Breast epithelium (tissue), 4 donors: ENCODE measurements at regions of chr9 and their contacts with region 1.

Region 1: DNA sequence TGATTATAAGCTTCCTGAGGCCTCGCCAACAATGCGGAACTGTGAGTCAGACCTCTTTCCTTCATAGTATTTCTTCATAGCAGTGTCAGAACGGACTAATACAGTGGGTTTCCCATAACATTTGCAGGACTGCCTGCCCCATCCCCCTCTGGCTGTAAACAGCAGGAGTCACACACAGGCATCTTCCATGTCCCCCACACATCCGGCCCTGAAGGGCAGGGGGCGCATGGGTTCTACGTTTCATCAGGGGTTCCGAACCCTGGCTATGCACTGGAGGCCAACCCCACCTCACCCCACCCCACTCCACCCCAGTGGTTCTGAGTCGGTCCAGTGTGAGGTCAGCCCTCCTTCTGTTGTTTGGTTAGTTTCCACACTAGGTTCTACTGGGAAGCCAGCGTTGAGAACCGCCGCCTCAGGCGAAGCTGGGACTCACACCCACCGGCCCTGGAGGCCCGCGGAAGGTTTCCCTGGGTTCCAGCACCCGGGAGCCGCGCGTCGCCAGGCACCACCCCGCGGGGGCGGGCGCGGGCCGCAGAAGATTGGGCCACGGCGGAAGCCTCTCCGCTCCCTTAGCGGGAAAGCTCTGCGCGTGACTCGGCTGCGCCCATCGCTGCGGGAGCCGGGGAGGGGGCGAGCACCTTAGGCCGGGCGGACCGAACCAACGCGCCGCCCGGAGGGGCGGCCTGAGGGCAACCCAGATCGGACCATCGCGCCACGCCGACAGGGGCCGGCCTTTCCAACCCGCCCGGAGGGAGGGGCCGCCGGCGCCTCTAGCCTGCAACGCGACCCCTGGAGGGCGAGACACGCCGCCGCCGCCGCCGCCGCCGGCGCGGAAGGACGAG is at the start of gene RUSC2:
- DNase-seq: peak; percentile 63 to 75
- H3K4me3 ChIP-seq: peak within 1 kb of the TSS; percentile 79 to 94 (median 91)
- H3K27ac ChIP-seq: peak within 1 kb of the TSS; percentile 98
- H3K4me1 ChIP-seq: peaks cover 4 to 5% of the 10 kb centered on the region in 2 donors
- H3K27me3 ChIP-seq: no peaks in the 10 kb centered on the region
- CTCF ChIP-seq: peak in 2 of 3 donors; percentile 23 to 52
- POLR2A ChIP-seq: peak; percentile 64
- total RNA-seq, gene RUSC2: 17.0 to 17.1 (median 17.1) TPM

Region 2: DNA sequence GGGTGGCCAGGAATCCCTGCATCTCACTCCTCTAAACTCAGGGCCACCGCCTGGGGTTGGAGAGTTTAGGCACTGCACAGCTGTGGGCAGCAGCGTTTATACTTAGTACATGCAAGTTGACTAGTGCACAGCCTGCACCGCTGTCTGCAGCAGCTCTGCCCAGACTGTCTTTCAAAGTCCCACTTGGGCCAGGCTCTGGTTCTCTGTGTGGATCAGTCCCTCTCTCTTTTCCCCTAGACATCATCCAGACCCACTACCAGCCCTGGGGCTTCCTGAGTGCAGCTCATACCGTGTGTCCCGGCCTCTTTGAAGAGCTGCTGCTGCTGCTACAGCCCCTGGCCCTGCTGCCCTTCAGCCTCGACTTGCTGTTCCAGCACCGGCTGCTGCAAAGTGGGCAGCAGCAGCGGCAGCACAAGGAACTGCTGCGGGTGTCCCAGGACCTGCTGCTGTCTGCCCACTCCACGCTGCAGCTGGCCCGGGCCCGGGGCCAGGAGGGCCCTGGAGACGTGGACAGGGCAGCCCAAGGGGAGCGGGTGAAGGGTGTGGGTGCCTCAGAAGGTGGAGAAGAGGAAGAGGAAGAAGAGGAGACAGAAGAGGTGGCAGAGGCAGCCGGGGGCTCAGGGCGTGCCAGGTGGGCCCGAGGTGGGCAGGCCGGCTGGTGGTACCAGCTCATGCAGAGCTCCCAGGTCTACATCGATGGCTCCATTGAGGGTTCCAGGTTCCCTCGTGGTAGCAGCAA is 70.4 kb after region 1 on chr9:
- intact Hi-C with region 1: loop called (anchors 5 kb)
- DNase-seq: no peak
- H3K4me3 ChIP-seq: no peak overlapping the region
- H3K27ac ChIP-seq: no peak overlapping the region
- H3K4me1 ChIP-seq: no peaks in the 10 kb centered on the region
- H3K27me3 ChIP-seq: no peaks in the 10 kb centered on the region
- CTCF ChIP-seq: no peak
- POLR2A ChIP-seq: no peak